HepG2 (cell line): ENCODE measurements at regions of chr1 and their contacts with region 1.

Region 1: GRCh38 chr1:28329395-28330153 is 734 bp downstream of the MED18 start:
- DNase-seq: peak; percentile 21
- ATAC-seq: peak; percentile 75
- H3K4me3 ChIP-seq: peak overlapping the region; percentile 61 to 90 (median 80)
- H3K27ac ChIP-seq: peak overlapping the region; percentile 90
- H3K4me1 ChIP-seq: peaks cover 32% of the 10 kb centered on the region
- H3K27me3 ChIP-seq: no peaks in the 10 kb centered on the region
- CTCF ChIP-seq: no peak
- EP300 ChIP-seq: no peak
- POLR2A ChIP-seq: no peak
- RAD21 ChIP-seq: no peak

Region 2: DNA sequence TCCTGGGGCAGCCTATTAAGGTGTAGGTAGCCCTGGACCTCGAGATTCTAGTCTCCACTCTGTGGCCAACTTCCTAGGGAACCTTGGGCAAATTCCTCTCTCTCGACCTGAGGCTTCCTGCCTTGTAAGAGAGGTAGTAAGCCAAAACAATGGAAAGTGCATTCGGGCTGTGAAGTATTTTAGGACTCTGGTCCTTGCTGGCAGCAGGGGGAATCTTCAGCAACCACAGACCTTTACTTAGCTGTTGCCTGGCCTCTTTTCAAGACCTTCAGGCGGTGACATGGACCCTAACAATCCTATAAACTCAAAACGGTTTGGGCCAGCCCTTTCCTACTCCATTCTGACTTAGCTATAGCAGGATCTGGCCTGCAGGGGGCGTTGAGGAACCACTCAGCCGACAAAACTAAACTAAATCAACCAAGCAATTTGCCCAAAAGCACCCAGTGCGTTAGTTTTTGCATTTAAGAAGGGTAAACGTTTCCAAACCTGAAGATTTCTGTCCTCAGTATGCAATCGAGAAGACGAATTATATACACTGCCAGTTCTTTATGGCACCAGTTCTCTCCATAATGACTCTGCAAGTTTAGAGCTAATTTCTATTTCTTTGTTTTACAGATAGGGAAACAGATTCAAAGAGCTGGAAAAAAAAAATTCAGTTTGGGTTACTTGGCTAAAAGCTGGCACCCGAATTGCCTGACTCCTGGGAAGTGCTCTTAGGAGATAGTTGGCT is 81.1 kb before region 1 on chr1:
- CTCF ChIA-PET with region 1: no interaction called
- POLR2A ChIA-PET with region 1: interaction called, 38 read pairs
- in situ Hi-C with region 1: no loop called
- intact Hi-C with region 1: no loop called
- DNase-seq: peak; percentile 61
- ATAC-seq: peak; percentile 44
- H3K4me3 ChIP-seq: peak overlapping the region; percentile 54 to 78 (median 75)
- H3K27ac ChIP-seq: peak overlapping the region; percentile 75
- H3K4me1 ChIP-seq: peaks cover 53% of the 10 kb centered on the region
- H3K27me3 ChIP-seq: no peaks in the 10 kb centered on the region
- CTCF ChIP-seq: peak; percentile 89
- EP300 ChIP-seq: no peak
- POLR2A ChIP-seq: no peak
- RAD21 ChIP-seq: peak; percentile 83

Region 3: GRCh38 chr1:28266920-28267322 is 62.7 kb before region 1 on chr1:
- CTCF ChIA-PET with region 1: no interaction called
- POLR2A ChIA-PET with region 1: interaction called, 10 read pairs
- in situ Hi-C with region 1: no loop called
- intact Hi-C with region 1: loop called (anchors 10 kb)
- DNase-seq: no peak
- ATAC-seq: peak; percentile 54; the same call in 2 of the 3 replicates
- H3K4me3 ChIP-seq: no peak overlapping the region
- H3K27ac ChIP-seq: peak overlapping the region; percentile 7
- H3K4me1 ChIP-seq: peaks cover 82% of the 10 kb centered on the region
- H3K27me3 ChIP-seq: no peaks in the 10 kb centered on the region
- CTCF ChIP-seq: no peak
- EP300 ChIP-seq: no peak
- POLR2A ChIP-seq: no peak
- RAD21 ChIP-seq: no peak

Region 4: GRCh38 chr1:28296401-28297261 is 32.9 kb before region 1 on chr1:
- CTCF ChIA-PET with region 1: no interaction called
- POLR2A ChIA-PET with region 1: interaction called, 25 read pairs
- in situ Hi-C with region 1: no loop called
- intact Hi-C with region 1: no loop called
- DNase-seq: peak; percentile 88
- ATAC-seq: peak; percentile 91
- H3K4me3 ChIP-seq: peak overlapping the region; percentile 22 to 62 (median 29); a peak in 5 of 6 replicates
- H3K27ac ChIP-seq: peak overlapping the region; percentile 55
- H3K4me1 ChIP-seq: peaks cover 41% of the 10 kb centered on the region
- H3K27me3 ChIP-seq: no peaks in the 10 kb centered on the region
- CTCF ChIP-seq: no peak
- EP300 ChIP-seq: peak; percentile 61 to 75; a peak in 3 of 4 replicates
- POLR2A ChIP-seq: peak; percentile 37 to 43; a peak in 2 of 4 replicates
- RAD21 ChIP-seq: no peak

Region 5: GRCh38 chr1:28341591-28341990 is 12.0 kb after region 1 on chr1:
- CTCF ChIA-PET with region 1: no interaction called
- POLR2A ChIA-PET with region 1: interaction called, 11 read pairs
- in situ Hi-C with region 1: no loop called
- intact Hi-C with region 1: no loop called
- DNase-seq: no peak
- ATAC-seq: no peak
- H3K4me3 ChIP-seq: no peak overlapping the region
- H3K27ac ChIP-seq: no peak overlapping the region
- H3K4me1 ChIP-seq: peaks cover 12% of the 10 kb centered on the region
- H3K27me3 ChIP-seq: no peaks in the 10 kb centered on the region
- CTCF ChIP-seq: no peak
- EP300 ChIP-seq: no peak
- POLR2A ChIP-seq: no peak
- RAD21 ChIP-seq: no peak

Region 6: DNA sequence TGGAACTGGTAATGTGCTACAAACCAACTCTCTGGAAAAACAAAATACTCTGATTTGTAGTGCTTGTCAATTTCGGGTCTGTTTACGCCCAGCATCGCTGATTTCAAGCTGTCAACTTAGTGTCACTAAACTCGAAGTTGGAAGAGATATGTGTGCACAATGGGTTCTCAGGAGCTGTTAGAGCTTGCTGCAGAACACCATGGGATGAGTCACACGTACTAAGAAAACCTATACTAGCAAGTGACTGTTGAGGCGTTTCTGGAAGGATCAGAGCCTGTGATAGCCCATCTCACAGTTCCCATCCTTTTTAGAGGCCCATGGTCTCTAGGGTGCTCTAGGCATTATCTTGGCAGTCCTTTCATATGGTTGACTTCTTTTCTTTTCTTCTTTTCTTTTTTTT is 353.3 kb after region 1 on chr1:
- CTCF ChIA-PET with region 1: no interaction called
- POLR2A ChIA-PET with region 1: no interaction called
- in situ Hi-C with region 1: no loop called
- intact Hi-C with region 1: no loop called
- DNase-seq: no peak
- ATAC-seq: no peak
- H3K4me3 ChIP-seq: no peak overlapping the region
- H3K27ac ChIP-seq: no peak overlapping the region
- H3K4me1 ChIP-seq: no peaks in the 10 kb centered on the region
- H3K27me3 ChIP-seq: no peaks in the 10 kb centered on the region
- CTCF ChIP-seq: no peak
- EP300 ChIP-seq: no peak
- POLR2A ChIP-seq: no peak
- RAD21 ChIP-seq: no peak